ENCODE measurements at regions of chr3 and their contacts with region 1.

Region 1: GRCh38 chr3:174973468-174973867 is 114.3 kb downstream of the NAALADL2 start:
- DNase-seq: peak; percentile 82
- H3K4me3 Mint-ChIP-seq: no peak overlapping the region
- H3K27ac Mint-ChIP-seq: peak overlapping the region; percentile 81
- H3K4me1 Mint-ChIP-seq: peaks cover 25% of the 10 kb centered on the region
- H3K27me3 Mint-ChIP-seq: no peaks in the 10 kb centered on the region
- CTCF ChIP-seq: no peak

Region 2: DNA sequence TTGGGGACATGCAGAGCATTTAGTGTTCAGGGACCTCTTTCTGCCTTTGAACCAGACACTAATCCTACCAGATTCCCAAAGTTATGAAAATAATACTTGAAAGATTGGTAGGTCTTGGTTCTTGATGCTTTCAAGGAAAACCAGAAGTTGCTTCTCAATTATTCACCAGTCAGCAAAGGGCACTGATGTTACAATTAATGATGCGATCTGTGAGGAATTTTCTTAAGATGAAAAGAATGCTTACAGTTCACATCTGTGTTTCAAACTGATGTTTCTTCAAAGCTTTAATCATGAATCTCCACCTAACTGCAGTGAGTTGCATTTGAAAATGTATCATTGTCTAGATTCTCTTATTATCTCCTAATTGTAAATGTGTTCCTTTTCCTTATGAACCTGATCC is 46.6 kb after region 1 on chr3:
- CTCF ChIA-PET with region 1: no interaction called
- intact Hi-C with region 1: no loop called
- DNase-seq: no peak
- H3K4me3 Mint-ChIP-seq: no peak overlapping the region
- H3K27ac Mint-ChIP-seq: no peak overlapping the region
- H3K4me1 Mint-ChIP-seq: no peaks in the 10 kb centered on the region
- H3K27me3 Mint-ChIP-seq: no peaks in the 10 kb centered on the region
- CTCF ChIP-seq: no peak

Region 3: GRCh38 chr3:175606650-175607318 is 633.3 kb after region 1 on chr3:
- CTCF ChIA-PET with region 1: no interaction called
- intact Hi-C with region 1: loop called (anchors 10 kb)
- DNase-seq: no peak
- H3K4me3 Mint-ChIP-seq: no peak overlapping the region
- H3K27ac Mint-ChIP-seq: peak overlapping the region; percentile 87
- H3K4me1 Mint-ChIP-seq: peaks cover 69% of the 10 kb centered on the region
- H3K27me3 Mint-ChIP-seq: no peaks in the 10 kb centered on the region
- CTCF ChIP-seq: no peak